Left colon (tissue), 2 donors: ENCODE measurements at regions of chr3 and their contacts with region 1.

Region 1: DNA sequence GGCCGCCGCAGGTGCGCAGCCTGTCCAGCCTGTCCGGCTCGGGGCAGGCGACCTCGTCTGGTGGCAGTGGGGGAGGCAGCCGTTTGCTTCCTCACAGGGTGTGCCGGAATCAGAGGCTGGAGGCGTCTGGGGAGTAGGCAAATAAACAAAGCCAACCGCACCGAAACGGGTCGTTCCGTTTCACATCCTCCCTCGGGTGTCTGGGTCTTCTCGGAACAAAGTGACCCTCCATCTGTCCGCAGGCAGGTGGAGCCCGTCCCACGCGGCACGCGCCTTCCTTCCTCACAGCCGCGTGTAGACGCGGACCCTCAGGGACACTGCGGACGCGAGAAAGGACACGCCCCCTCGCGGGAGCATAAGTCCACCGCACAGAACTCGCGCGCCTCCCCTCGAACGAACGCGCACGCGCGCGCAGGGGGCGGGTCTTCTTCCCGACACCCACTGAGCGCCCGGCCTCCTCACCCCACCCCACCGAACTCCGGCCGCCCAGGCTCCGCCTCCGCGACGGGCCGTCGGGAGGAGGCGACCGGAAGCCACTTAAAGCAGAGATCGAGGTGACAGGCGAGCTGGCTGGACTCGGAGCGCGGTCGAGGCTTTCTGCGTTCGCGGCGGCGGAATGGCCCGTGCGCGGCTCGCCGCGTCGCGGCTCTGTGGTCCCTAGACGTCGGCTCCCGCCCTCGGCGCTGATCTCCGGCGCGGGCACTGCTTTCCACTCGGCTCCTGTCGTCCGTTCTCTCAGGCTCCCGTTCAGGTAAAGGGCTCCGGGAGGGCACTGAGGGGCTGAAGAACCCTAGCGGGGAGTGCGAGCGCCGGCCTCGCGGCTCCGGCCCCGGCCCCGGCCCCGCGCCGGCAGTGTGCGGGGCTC is at the start of gene TIPARP:
- DNase-seq: peak; percentile 99
- ATAC-seq: peak; percentile 88
- total RNA-seq, gene TIPARP: 31.1 to 33.9 TPM

Region 2: DNA sequence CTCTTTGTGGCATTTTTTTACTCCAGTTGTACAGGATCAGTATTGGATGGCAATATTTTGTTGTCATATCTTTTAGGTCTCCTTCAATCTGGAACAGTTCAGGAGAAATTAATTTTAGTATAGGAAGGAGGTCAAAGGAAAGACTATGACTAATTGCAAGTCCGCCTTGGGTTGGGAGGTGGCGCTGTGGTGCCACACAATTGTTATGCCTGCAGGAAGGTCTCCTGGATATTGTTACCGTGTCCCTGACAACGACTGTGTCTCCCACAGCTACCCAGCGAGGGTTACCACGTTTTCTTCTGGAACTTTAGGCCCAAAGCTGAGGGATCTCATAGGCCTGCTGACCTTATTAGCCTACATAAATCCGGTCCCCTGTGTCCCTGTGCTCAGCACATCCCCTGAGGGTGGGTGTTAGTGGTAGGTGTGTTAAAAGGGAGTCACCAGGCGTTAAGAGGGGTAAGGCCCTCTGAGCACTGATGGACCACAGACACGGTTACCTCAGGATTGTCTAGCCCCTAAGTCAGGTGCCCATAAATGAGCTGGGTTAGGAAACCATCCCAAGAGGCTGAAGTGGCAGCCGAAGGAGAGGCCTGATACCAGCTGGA is 522.4 kb before region 1 on chr3:
- intact Hi-C with region 1: loop called in 1 of 2 experiments (anchors 10 kb)
- DNase-seq: peak; percentile 56 to 67
- ATAC-seq: peak; percentile 88

Region 3: GRCh38 chr3:156554842-156555687 is 119.2 kb before region 1 on chr3 and contains the start of gene SSR3:
- intact Hi-C with region 1: loop called in 1 of 2 experiments (anchors 10 kb)
- DNase-seq: peak; percentile 99
- ATAC-seq: peak; percentile 100
- total RNA-seq, gene SSR3: 114 to 123 TPM

Region 4: GRCh38 chr3:156615592-156616173 is 58.6 kb before region 1 on chr3:
- intact Hi-C with region 1: no loop called
- DNase-seq: no peak
- ATAC-seq: no peak

Region 5: GRCh38 chr3:156816800-156817645 is 142.7 kb after region 1 on chr3:
- intact Hi-C with region 1: loop called in 1 of 2 experiments (anchors 5 kb)
- DNase-seq: peak; percentile 93 to 94
- ATAC-seq: peak; percentile 89

Region 6: DNA sequence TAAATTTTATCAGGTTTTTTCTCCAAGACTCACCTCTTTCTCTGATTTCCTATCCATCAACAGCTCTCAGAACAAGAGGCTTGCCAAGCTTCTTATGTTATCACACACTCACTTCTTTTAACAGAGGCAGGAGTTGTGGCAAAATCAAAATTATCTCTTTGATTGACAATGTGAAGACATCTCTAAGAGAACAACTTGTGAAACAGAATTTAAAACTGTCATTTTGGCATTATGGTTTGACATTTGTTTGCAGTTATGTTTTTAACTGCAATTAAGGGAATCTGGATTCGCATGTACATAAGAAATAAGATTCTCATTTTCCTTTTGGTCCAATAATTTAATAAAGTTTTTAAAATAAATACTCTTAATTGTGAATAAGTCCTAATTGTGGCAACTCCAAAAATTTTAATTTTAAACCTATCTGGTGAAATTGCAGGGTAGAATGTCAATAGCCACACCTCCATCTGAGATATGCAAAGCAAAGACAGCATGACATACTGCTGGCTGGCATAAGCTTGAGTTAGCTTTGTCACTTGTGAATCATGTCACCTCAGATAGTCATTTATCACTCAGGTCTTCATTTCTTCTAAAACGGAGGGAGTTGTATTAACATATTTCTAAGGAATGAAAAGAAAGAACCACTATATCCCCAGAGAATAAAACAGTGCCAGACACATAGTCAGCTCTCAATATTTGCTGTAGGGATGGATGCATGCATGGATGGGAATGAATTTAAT is 327.1 kb after region 1 on chr3:
- intact Hi-C with region 1: no loop called
- DNase-seq: no peak
- ATAC-seq: no peak

Region 7: DNA sequence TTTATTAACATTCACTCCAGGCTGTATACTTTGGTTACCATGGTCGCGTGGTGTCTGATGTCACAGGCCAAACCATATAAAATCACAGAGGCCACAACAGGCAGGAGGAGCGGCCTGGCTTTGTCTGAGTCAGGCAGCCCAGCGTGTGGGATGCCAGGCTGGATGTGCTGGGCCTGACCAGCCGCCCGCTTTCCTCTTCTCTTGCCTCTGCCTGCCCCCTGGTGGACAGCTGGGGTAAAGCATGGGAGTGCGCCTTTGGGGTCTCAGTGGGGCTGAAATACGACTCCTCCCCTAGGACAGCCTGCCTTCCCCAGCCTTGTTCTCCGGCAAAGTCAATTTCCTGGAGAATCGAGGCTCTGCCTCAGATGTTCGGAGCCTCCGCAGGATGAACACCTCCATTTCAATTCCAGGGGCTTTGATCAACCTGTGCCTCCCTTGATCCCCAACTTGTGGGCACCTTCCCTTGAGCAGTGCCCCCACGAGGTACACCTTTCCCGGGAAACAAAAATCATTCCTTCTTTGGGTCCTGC is 407.5 kb after region 1 on chr3:
- intact Hi-C with region 1: loop called (anchors 2 to 10 kb)
- DNase-seq: peak; percentile 90 to 92
- ATAC-seq: peak; percentile 98

Region 8: GRCh38 chr3:157130467-157131251 is 456.4 kb after region 1 on chr3:
- intact Hi-C with region 1: loop called in 1 of 2 experiments (anchors 10 kb)
- DNase-seq: peak; percentile 85 to 96
- ATAC-seq: peak; percentile 82